CD4-positive, alpha-beta T cell (primary cell): ENCODE measurements at regions of chr3 and their contacts with region 1.

Region 1: GRCh38 chr3:100590114-100590839 is 19.1 kb upstream of the ADGRG7 start:
- DNase-seq: peak; percentile 13 to 84 (median 44)
- ATAC-seq: peak; percentile 89
- H3K4me3 ChIP-seq: no peak overlapping the region
- H3K4me3 Mint-ChIP-seq: no peak overlapping the region
- H3K27ac ChIP-seq: no peak overlapping the region
- H3K27ac Mint-ChIP-seq: no peak overlapping the region
- H3K4me1 ChIP-seq: peaks cover 4% of the 10 kb centered on the region
- H3K4me1 Mint-ChIP-seq: no peaks in the 10 kb centered on the region
- H3K27me3 ChIP-seq: no peaks in the 10 kb centered on the region
- H3K27me3 Mint-ChIP-seq: no peaks in the 10 kb centered on the region
- CTCF ChIP-seq: peak; percentile 90

Region 2: GRCh38 chr3:99833617-99834205 is 756.6 kb before region 1 on chr3:
- CTCF ChIA-PET with region 1: interaction called, 4 read pairs
- POLR2A ChIA-PET with region 1: no interaction called
- intact Hi-C with region 1: loop called (anchors 1 to 2 kb)
- DNase-seq: no peak
- ATAC-seq: no peak
- H3K4me3 ChIP-seq: no peak overlapping the region
- H3K4me3 Mint-ChIP-seq: no peak overlapping the region
- H3K27ac ChIP-seq: no peak overlapping the region
- H3K27ac Mint-ChIP-seq: no peak overlapping the region
- H3K4me1 ChIP-seq: no peaks in the 10 kb centered on the region
- H3K4me1 Mint-ChIP-seq: no peaks in the 10 kb centered on the region
- H3K27me3 ChIP-seq: no peaks in the 10 kb centered on the region
- H3K27me3 Mint-ChIP-seq: no peaks in the 10 kb centered on the region
- CTCF ChIP-seq: no peak

Region 3: DNA sequence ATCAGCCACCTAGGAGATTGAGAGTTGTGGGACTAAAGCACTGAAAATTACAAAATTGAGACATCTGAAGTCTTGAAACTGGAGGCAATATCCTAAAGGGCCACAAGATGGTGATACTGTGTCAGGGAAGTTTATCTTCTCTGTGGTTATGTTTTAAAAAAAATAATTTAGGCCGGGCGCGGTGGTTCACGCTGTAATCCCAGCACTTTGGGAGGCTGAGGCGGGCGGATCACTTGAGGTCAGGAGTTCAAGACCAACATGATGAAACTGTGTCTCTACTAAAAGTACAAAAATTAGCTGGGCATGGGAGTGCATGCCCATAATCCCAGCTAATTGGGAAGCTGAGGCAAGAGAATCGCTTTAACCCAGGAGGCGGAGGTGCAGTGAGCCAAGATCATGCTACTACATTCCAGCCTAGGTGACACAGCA is 273.6 kb before region 1 on chr3:
- CTCF ChIA-PET with region 1: interaction called, 9 read pairs
- POLR2A ChIA-PET with region 1: no interaction called
- intact Hi-C with region 1: loop called (anchors 1 to 2 kb)
- DNase-seq: peak in 9 of 14 experiments; percentile 12 to 74 (median 21)
- ATAC-seq: peak; percentile 89
- H3K4me3 ChIP-seq: no peak overlapping the region
- H3K4me3 Mint-ChIP-seq: no peak overlapping the region
- H3K27ac ChIP-seq: no peak overlapping the region
- H3K27ac Mint-ChIP-seq: no peak overlapping the region
- H3K4me1 ChIP-seq: peaks cover 3% of the 10 kb centered on the region
- H3K4me1 Mint-ChIP-seq: peaks cover 5% of the 10 kb centered on the region
- H3K27me3 ChIP-seq: no peaks in the 10 kb centered on the region
- H3K27me3 Mint-ChIP-seq: no peaks in the 10 kb centered on the region
- CTCF ChIP-seq: peak; percentile 48

Region 4: DNA sequence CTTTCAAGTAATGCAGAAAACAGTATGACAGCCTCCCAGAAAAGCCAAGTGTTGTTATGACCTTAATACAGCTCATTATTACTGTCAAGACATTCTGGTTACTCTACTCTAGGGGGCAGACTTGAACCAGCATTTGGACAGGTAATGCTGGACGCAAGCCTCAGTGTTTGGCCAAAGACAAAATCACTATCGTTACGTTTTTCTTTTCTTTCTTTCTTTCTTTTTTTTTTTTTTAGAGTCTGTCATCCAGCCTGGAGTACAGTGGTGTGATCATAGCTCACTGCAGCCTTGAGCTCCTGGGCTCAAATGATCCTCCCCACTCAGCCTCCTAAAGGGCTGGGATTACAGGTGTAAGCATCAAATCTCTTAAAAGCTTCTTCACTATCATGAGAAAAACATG is 127.3 kb before region 1 on chr3:
- CTCF ChIA-PET with region 1: no interaction called
- POLR2A ChIA-PET with region 1: no interaction called
- intact Hi-C with region 1: loop called in 1 of 2 experiments (anchors 2 kb)
- DNase-seq: peak in 3 of 14 experiments; percentile 23 to 38 (median 30)
- ATAC-seq: no peak
- H3K4me3 ChIP-seq: no peak overlapping the region
- H3K4me3 Mint-ChIP-seq: no peak overlapping the region
- H3K27ac ChIP-seq: no peak overlapping the region
- H3K27ac Mint-ChIP-seq: no peak overlapping the region
- H3K4me1 ChIP-seq: no peaks in the 10 kb centered on the region
- H3K4me1 Mint-ChIP-seq: no peaks in the 10 kb centered on the region
- H3K27me3 ChIP-seq: no peaks in the 10 kb centered on the region
- H3K27me3 Mint-ChIP-seq: no peaks in the 10 kb centered on the region
- CTCF ChIP-seq: peak; percentile 11